CD4-positive, alpha-beta memory T cell (primary cell): ENCODE measurements at regions of chr11 and their contacts with region 1.

Region 1: DNA sequence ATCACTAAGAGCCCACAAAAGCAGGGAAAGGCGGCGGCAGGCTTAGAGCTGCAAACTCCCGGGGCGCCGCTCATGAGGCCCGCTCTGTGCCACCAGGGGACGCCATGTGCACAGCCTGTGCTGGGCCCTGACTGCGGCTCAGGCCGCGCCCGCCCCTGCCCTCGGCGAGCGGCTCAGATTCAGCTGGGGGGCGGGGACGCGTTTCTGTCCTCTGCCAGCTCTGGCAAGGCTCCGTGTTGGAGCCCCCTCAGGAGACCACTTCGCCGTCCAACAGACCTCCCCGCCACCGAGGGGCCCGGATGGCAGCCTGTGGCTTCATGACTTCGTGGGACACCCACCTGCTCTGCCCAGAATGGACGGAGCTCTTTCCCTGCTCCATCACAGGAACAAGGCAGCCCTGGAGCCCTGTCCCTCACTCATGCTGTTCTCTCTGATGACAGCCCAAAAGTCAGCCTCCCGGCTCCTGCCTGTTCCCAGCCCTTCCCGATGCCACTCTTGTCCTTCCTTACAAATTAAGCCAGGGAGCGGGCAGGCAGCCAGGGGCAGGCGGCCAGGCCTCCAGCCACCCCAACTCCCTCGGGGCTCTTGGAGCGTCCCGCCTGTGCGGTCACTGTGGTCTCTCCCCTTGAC is 69.1 kb downstream of the NAT10 start:
- DNase-seq: peak; percentile 67 to 76 (median 72)
- H3K4me3 ChIP-seq: no peak overlapping the region
- H3K4me3 Mint-ChIP-seq: peak overlapping the region in 7 of 8 donors; percentile 21 to 68 (median 57)
- H3K27ac ChIP-seq: no peak overlapping the region
- H3K27ac Mint-ChIP-seq: peak overlapping the region in 1 of 7 donors; percentile 35
- H3K4me1 ChIP-seq: peaks cover 6% of the 10 kb centered on the region
- H3K4me1 Mint-ChIP-seq: peaks cover 0 to 7% (median 1%) of the 10 kb centered on the region in 4 donors
- H3K27me3 ChIP-seq: no peaks in the 10 kb centered on the region
- H3K27me3 Mint-ChIP-seq: peaks cover 0 to 3% of the 10 kb centered on the region in 2 donors

Region 2: GRCh38 chr11:34149786-34150185 is 24.7 kb before region 1 on chr11:
- CTCF ChIA-PET with region 1: interaction called, 10 read pairs
- POLR2A ChIA-PET with region 1: interaction called, 3 read pairs
- intact Hi-C with region 1: no loop called
- DNase-seq: no peak
- H3K4me3 ChIP-seq: no peak overlapping the region
- H3K4me3 Mint-ChIP-seq: no peak overlapping the region
- H3K27ac ChIP-seq: no peak overlapping the region
- H3K27ac Mint-ChIP-seq: no peak overlapping the region
- H3K4me1 ChIP-seq: no peaks in the 10 kb centered on the region
- H3K4me1 Mint-ChIP-seq: peaks cover 0 to 4% (median 2%) of the 10 kb centered on the region in 4 donors
- H3K27me3 ChIP-seq: no peaks in the 10 kb centered on the region
- H3K27me3 Mint-ChIP-seq: no peaks in the 10 kb centered on the region

Region 3: DNA sequence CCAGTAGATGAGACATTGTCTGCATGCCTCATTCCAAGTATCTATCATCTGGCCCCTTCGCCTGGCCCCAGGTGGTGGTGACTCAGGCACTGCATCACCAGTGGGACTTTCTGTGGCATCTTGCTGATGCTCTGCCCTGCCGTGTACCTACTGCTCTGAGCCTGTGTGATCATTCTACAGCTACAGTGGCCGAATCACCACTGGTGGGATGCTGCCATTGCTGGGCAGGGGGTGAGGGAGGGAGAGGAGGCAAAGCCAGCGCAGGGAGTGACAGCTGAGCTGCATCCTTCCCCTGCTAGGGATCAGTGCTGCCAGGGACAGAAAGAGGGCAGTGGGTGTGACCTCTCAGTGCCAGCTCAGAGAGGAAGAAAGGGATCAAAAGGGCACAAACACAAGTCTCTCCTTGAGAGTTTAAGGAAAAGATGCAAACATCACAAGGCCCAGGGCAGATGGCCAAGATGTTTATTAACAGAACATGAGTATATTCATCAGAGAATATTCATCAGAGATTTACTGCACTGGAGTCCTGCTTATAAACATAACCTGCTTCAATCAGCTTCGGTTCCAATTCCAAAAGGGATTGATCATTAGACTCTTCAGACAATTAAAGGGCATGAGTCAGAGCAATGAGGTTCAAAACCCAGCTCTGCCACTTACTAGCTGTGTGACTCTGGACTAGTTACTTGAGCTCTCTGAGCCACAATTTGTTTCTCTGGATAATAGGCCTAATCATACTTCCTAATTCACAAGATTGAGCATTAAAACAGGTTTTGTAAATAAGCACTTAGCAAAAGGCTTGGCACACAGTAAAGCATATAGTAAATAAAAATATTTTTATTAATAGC is 40.7 kb after region 1 on chr11:
- CTCF ChIA-PET with region 1: no interaction called
- POLR2A ChIA-PET with region 1: no interaction called
- intact Hi-C with region 1: no loop called
- DNase-seq: peak in 1 of 5 donors; percentile 50
- H3K4me3 ChIP-seq: no peak overlapping the region
- H3K4me3 Mint-ChIP-seq: no peak overlapping the region
- H3K27ac ChIP-seq: no peak overlapping the region
- H3K27ac Mint-ChIP-seq: peak overlapping the region in 1 of 7 donors; percentile 37
- H3K4me1 ChIP-seq: no peaks in the 10 kb centered on the region
- H3K4me1 Mint-ChIP-seq: peaks cover 0 to 3% (median 0%) of the 10 kb centered on the region in 4 donors
- H3K27me3 ChIP-seq: no peaks in the 10 kb centered on the region
- H3K27me3 Mint-ChIP-seq: no peaks in the 10 kb centered on the region

Region 4: GRCh38 chr11:34250732-34251639 is 76.5 kb after region 1 on chr11:
- CTCF ChIA-PET with region 1: interaction called, 25 read pairs
- POLR2A ChIA-PET with region 1: no interaction called
- intact Hi-C with region 1: loop called (anchors 2 kb)
- DNase-seq: peak; percentile 45 to 87 (median 72)
- H3K4me3 ChIP-seq: peak overlapping the region in 1 of 2 donors; percentile 7
- H3K4me3 Mint-ChIP-seq: peak overlapping the region in 7 of 8 donors; percentile 26 to 81 (median 57)
- H3K27ac ChIP-seq: no peak overlapping the region
- H3K27ac Mint-ChIP-seq: peak overlapping the region in 4 of 7 donors; percentile 23 to 87 (median 53)
- H3K4me1 ChIP-seq: peaks cover 49% of the 10 kb centered on the region
- H3K4me1 Mint-ChIP-seq: peaks cover 38 to 61% (median 48%) of the 10 kb centered on the region in 4 donors
- H3K27me3 ChIP-seq: no peaks in the 10 kb centered on the region
- H3K27me3 Mint-ChIP-seq: peaks cover 0 to 3% of the 10 kb centered on the region in 2 donors

Region 5: DNA sequence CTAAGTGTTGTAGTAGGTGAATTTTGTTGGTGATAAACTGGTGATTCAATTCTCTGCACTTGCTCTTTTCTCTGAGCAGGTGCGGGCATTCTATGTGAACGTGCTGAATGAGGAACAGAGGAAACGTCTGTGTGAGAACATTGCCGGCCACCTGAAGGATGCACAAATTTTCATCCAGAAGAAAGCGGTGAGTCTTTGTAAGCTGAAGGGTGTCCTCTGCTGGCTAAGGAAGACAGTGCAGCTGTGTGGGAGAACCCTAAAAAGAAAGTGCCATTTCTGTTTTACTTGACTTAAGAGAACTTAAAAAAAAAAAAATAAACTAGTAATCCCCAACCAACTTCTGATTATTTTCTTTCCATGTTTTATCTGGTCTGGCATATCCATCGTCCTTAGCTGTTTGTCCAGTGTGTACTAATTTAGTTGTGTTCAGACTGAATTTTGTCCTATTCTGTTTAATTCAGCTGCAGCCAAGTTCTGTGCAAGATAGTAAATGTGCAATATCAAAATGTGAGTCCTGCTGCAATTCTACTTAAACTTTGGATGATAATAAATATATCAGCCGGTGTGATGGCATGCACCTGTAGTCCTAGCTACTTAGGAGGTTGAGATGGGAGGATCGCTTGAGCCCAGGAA is 293.8 kb after region 1 on chr11:
- CTCF ChIA-PET with region 1: interaction called, 22 read pairs
- POLR2A ChIA-PET with region 1: no interaction called
- intact Hi-C with region 1: loop called (anchors 1 kb)
- DNase-seq: peak in 4 of 5 donors; percentile 12 to 29 (median 28)
- H3K4me3 ChIP-seq: no peak overlapping the region
- H3K4me3 Mint-ChIP-seq: no peak overlapping the region
- H3K27ac ChIP-seq: no peak overlapping the region
- H3K27ac Mint-ChIP-seq: peak overlapping the region in 2 of 7 donors; percentile 25 to 77
- H3K4me1 ChIP-seq: peaks cover 5% of the 10 kb centered on the region
- H3K4me1 Mint-ChIP-seq: peaks cover 6 to 16% (median 9%) of the 10 kb centered on the region in 4 donors
- H3K27me3 ChIP-seq: no peaks in the 10 kb centered on the region
- H3K27me3 Mint-ChIP-seq: no peaks in the 10 kb centered on the region